Cardiac septum (tissue), 1 donor: ENCODE measurements at regions of chr9 and their contacts with region 1.

Region 1: GRCh38 chr9:116318468-116319374 is 165.1 kb downstream of the PAPPA start:
- DNase-seq: no peak

Region 2: DNA sequence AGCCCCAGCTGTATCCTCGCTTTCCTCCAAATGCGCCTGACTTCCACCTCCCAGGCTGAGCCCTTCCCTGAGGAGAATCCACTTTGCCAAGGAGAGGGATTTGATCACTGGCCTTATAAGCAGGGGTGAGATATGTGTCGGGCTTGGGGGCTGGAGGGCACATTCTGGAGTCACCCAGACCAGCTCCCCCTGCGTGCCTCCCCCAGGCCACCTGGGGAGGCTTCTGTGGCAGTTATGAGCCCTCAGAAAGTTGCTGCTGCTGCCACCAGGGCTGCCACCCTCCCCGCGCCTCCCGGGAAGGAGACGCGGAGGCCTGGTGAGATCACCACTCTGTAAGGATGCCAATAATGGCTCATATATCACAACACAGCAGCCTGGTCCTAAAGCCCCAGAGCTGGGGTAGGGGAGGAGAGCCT is 46.3 kb after region 1 on chr9:
- intact Hi-C with region 1: loop called (anchors 5 kb)
- DNase-seq: peak; percentile 83